ENCODE measurements at regions of chr13 and their contacts with region 1.

Region 1: DNA sequence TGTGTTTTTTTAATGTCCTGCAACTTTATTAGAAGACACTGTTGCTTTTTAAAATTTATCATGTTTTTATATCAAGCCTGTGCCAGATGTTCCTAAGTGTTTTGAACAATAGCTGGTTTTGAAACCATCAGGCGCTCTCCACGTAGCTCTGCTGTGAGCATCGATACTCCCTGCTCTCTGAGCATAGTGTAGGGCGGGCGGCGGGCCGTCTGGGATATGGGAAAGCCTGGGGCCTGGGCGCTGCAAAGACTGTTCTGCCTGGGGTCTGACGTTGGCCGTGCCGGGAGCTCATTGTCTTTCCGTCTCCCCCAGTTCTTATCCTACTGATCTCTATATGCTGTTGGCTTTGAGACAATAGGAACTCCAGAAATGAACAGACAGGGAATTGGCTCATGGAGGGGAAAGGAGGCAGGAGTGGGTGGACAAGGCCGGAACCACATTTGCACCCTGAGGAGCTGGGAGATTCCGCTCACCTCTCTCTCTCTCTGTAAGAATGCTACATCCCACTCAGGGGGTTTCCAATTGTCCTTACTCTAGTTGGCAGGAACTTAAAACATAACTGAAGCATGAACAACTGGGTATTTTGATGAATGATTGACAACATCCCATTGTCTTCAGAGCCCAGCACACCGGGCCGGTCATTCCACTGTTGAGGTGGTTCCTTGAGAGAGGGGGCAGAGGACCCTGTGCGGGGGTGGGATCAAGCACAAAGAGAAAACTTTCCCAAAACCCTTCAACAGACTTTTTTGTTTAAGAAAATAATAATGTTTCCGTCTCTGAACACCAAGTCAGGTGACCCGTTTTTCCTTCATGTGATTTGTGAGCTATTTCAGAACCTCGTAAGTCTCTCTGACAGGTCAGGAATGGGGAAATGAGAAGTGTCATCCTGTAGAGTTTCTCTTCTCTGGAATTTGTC is 64.7 kb downstream of the COL4A2 start:
- DNase-seq: peak; percentile 81
- H3K4me3 ChIP-seq: no peak overlapping the region
- H3K27ac ChIP-seq: peak overlapping the region; percentile 72
- H3K4me1 ChIP-seq: peaks cover 45% of the 10 kb centered on the region
- H3K27me3 ChIP-seq: no peaks in the 10 kb centered on the region
- CTCF ChIP-seq: no peak
- POLR2A ChIP-seq: no peak

Region 2: DNA sequence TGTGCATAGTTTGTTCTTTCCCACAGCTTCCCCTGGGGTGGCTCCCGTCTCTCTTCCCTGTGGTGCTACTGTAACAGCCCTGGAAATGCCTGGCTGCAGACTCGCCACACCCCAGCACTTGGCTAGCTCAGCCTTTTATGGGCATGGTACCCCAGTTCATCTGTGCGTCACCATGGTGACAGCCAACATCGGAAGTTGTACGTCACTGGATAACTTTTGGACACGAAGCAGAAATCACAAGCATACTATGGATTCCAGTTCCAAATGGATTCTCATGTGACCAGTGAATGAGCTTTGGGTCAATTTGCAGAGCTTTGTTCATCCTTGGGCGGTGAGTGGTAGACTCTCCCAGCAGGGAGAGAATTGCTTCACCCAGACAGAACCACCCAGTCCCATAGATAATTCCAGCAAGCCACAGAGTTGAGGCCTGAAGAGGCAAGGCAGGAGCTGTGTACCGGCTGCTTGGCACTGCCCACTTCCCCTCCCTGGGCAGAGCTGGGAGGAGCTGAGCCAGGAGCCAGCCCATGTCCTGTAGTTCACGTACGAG is 10.4 kb before region 1 on chr13:
- CTCF ChIA-PET with region 1: interaction called, 10 read pairs
- POLR2A ChIA-PET with region 1: no interaction called
- dilution Hi-C with region 1: no loop called
- intact Hi-C with region 1: no loop called
- DNase-seq: no peak
- H3K4me3 ChIP-seq: no peak overlapping the region
- H3K27ac ChIP-seq: no peak overlapping the region
- H3K4me1 ChIP-seq: no peaks in the 10 kb centered on the region
- H3K27me3 ChIP-seq: no peaks in the 10 kb centered on the region
- CTCF ChIP-seq: no peak
- POLR2A ChIP-seq: no peak